ENCODE measurements at regions of chr7 and their contacts with region 1.

Region 1: DNA sequence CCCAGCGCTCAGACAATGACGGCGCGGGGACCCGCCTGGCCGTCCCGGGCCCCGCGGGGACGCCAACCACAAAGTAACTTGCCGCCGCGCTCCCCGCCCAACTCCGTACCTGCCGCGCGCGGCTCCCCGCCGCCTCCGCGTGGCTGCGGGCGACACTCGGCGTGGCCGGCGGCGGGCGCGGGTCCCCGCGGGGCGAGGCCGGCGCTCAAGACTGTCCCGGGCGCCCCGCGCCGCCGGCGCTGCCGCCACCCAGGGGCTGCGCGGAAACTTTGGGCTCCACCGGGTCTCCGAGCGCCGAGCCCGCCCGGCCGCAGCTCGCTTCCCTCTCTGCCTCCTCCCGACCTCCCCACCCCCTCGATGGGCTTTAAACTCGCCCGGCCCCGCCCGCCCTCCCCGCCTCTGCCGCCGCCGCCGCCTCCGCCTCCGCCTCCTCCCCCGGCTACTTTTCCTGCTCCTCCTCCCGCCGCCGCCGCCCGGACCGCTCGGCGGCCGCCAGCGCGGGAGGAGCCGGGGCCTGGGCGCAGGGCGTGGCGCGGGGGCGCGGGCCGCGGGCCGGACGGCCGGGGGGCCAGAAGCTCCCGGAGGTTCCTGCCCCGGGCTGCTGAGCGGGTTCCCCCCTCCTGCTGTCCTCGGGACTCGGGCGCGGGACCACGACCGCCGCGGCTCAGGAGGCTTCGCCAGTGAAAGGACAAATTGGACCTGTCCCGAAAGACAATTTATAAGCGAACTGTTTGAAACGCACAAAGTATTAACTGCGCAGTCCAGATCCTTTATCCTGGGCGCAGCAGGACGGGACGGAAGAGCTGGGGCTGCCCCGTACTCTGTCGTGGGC is 10.6 kb upstream of the GRB10 start:
- DNase-seq: peak; percentile 54 to 63
- ATAC-seq: peak; percentile 70 to 74
- H3K4me3 ChIP-seq: peak overlapping the region; percentile 58 to 73 (median 60)
- H3K27ac ChIP-seq: peak overlapping the region; percentile 62 to 86 (median 81)
- H3K4me1 ChIP-seq: peaks cover 21 to 28% of the 10 kb centered on the region in 2 donors
- H3K27me3 ChIP-seq: no peaks in the 10 kb centered on the region
- CTCF ChIP-seq: no peak
- POLR2A ChIP-seq: peak; percentile 68 to 73

Region 2: GRCh38 chr7:50595491-50596102 is 197.7 kb before region 1 on chr7:
- in situ Hi-C with region 1: no loop called
- intact Hi-C with region 1: loop called (anchors 5 kb)
- DNase-seq: peak in 1 of 2 donors; percentile 65
- ATAC-seq: peak; percentile 46 to 89
- H3K4me3 ChIP-seq: no peak overlapping the region
- H3K27ac ChIP-seq: peak overlapping the region in 3 of 4 donors; percentile 5 to 48 (median 31)
- H3K4me1 ChIP-seq: peaks cover 17 to 25% of the 10 kb centered on the region in 2 donors
- H3K27me3 ChIP-seq: no peaks in the 10 kb centered on the region
- CTCF ChIP-seq: peak; percentile 44 to 64 (median 49)
- POLR2A ChIP-seq: no peak

Region 3: GRCh38 chr7:50632561-50633413 is 160.5 kb before region 1 on chr7:
- in situ Hi-C with region 1: no loop called
- intact Hi-C with region 1: loop called (anchors 5 kb)
- DNase-seq: peak in 1 of 2 donors; percentile 68
- ATAC-seq: peak in 1 of 2 donors; percentile 50
- H3K4me3 ChIP-seq: no peak overlapping the region
- H3K27ac ChIP-seq: peak overlapping the region; percentile 77 to 93 (median 82)
- H3K4me1 ChIP-seq: peaks cover 60 to 79% of the 10 kb centered on the region in 2 donors
- H3K27me3 ChIP-seq: no peaks in the 10 kb centered on the region
- CTCF ChIP-seq: peak; percentile 75 to 91 (median 81)
- POLR2A ChIP-seq: no peak

Region 4: GRCh38 chr7:50687575-50688225 is 105.6 kb before region 1 on chr7:
- in situ Hi-C with region 1: no loop called
- intact Hi-C with region 1: loop called (anchors 5 kb)
- DNase-seq: no peak
- ATAC-seq: peak; percentile 79 to 85
- H3K4me3 ChIP-seq: no peak overlapping the region
- H3K27ac ChIP-seq: peak overlapping the region; percentile 47 to 84 (median 70)
- H3K4me1 ChIP-seq: peaks cover 39 to 41% of the 10 kb centered on the region in 2 donors
- H3K27me3 ChIP-seq: no peaks in the 10 kb centered on the region
- CTCF ChIP-seq: no peak
- POLR2A ChIP-seq: no peak

Region 5: GRCh38 chr7:50761713-50762112 is 31.6 kb before region 1 on chr7:
- in situ Hi-C with region 1: no loop called
- intact Hi-C with region 1: no loop called
- DNase-seq: no peak
- ATAC-seq: no peak
- H3K4me3 ChIP-seq: no peak overlapping the region
- H3K27ac ChIP-seq: no peak overlapping the region
- H3K4me1 ChIP-seq: peaks cover 35 to 42% of the 10 kb centered on the region in 2 donors
- H3K27me3 ChIP-seq: no peaks in the 10 kb centered on the region
- CTCF ChIP-seq: no peak
- POLR2A ChIP-seq: no peak

Region 6: GRCh38 chr7:51029701-51030191 is 236.4 kb after region 1 on chr7:
- in situ Hi-C with region 1: no loop called
- intact Hi-C with region 1: loop called (anchors 5 kb)
- DNase-seq: no peak
- ATAC-seq: no peak
- H3K4me3 ChIP-seq: no peak overlapping the region
- H3K27ac ChIP-seq: peak overlapping the region in 2 of 4 donors; percentile 20 to 77
- H3K4me1 ChIP-seq: peaks cover 33 to 44% of the 10 kb centered on the region in 2 donors
- H3K27me3 ChIP-seq: no peaks in the 10 kb centered on the region
- CTCF ChIP-seq: no peak
- POLR2A ChIP-seq: no peak

Region 7: GRCh38 chr7:51067757-51068156 is 274.4 kb after region 1 on chr7:
- in situ Hi-C with region 1: loop called in 2 of 4 experiments (anchors 25 kb)
- intact Hi-C with region 1: loop called (anchors 5 kb)
- DNase-seq: peak in 1 of 2 donors; percentile 36
- ATAC-seq: peak; percentile 57 to 58
- H3K4me3 ChIP-seq: no peak overlapping the region
- H3K27ac ChIP-seq: no peak overlapping the region
- H3K4me1 ChIP-seq: peaks cover 6 to 8% of the 10 kb centered on the region in 2 donors
- H3K27me3 ChIP-seq: no peaks in the 10 kb centered on the region
- CTCF ChIP-seq: peak; percentile 58 to 77 (median 72)
- POLR2A ChIP-seq: no peak

Measured in gastrocnemius medialis (tissue), 4 donors.